Vagina (tissue), 2 donors: ENCODE measurements at regions of chr11 and their contacts with region 1.

Region 1: DNA sequence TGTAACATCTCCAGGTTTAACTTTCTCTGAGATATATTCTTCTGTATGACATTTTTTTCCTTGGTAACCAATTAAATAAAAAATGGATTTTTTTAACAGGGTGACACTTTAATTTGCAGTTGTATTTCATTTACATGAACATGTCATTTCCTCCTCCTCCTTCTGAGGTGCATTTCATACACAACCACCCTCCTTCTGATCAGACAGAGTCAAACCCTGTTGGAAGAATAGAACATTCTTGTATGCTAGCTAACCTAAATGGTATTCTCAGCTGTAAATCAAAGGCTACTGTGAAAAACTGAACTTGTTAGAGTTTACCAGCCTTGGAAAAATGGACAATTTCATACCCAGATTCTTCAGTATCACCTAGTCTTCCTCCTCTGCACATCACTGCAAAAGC is 52.7 kb upstream of the CHRM4 start:
- DNase-seq: no peak
- H3K4me3 ChIP-seq: no peak overlapping the region
- H3K27ac ChIP-seq: no peak overlapping the region
- H3K4me1 ChIP-seq: peaks cover 13% of the 10 kb centered on the region
- H3K27me3 ChIP-seq: no peaks in the 10 kb centered on the region
- CTCF ChIP-seq: no peak
- POLR2A ChIP-seq: no peak

Region 2: GRCh38 chr11:46485856-46486443 is 41.6 kb after region 1 on chr11:
- intact Hi-C with region 1: no loop called
- DNase-seq: no peak
- H3K4me3 ChIP-seq: no peak overlapping the region
- H3K27ac ChIP-seq: no peak overlapping the region
- H3K4me1 ChIP-seq: peaks cover 19% of the 10 kb centered on the region
- H3K27me3 ChIP-seq: no peaks in the 10 kb centered on the region
- CTCF ChIP-seq: no peak
- POLR2A ChIP-seq: no peak

Region 3: DNA sequence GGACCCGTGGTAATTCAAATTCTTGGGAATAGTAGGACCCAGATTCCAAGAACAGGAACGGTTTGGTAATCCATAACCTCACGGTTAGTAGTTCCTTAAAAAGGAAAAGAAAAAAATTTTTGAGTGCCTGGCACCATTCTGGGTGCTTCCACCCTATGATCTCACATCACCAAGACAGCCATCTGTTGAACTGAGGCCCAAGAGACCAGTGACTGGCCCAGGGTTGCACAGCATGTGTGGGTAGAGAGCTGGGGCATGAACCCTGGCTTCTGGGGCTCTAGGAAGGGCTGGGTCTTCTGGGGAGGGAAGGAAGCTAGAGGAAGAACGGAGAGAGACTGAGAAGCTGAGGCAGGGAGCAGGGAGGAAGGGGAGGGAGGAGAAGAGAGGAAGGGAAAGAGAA is 938.8 kb after region 1 on chr11:
- intact Hi-C with region 1: loop called (anchors 5 kb)
- DNase-seq: no peak
- H3K4me3 ChIP-seq: no peak overlapping the region
- H3K27ac ChIP-seq: no peak overlapping the region
- H3K4me1 ChIP-seq: peaks cover 5% of the 10 kb centered on the region
- H3K27me3 ChIP-seq: no peaks in the 10 kb centered on the region
- CTCF ChIP-seq: no peak
- POLR2A ChIP-seq: no peak